Pancreas (tissue), 10 donors: ENCODE measurements at regions of chr11 and their contacts with region 1.

Region 1: DNA sequence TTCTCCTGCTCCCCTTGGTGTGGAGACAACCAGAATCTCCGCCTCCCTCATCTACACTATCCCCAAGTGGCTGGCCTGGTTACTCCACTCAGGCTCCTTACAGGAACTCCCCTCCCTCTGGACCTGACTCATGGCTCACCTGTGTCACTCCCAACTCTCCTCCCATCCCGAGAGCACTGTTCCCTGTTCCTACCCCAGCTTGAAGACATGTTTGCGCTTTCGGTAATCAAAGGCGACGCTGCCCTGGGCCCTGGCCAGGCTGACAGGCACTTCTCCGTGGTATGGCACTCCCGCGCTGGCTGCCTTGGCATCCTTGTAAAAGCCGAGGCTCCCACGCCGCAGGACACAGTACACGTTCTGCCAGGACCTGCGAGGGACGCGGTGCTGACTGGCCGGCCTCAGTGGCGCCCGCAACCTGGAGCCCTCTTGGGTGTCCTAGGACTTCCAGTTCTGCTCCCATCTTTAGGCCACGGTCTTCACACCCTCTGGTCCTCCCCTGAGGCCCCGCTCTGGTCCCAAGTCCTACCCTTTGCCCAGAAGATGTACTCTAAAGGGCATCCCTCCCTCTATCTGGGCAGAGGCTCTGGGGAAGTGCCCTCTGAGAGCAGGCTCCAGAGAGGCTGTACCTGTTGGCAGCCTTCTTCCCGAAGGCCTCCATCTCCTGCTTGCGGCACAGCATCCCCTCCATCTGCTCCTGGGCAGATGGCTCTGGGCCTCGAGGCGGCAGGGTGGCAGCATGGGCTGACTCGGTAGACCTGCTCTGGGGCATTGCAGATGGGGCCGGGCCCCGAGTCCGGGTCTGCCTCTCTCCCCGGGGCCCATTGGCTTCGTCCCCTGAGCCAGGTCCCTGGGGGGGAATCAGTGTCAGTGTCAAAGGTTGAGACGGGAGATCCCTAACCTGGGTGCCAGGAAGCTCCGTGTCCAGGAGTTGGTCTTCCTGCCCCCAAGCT is 9.4 kb upstream of the RBM4B start:
- DNase-seq: peak in 1 of 6 donors; percentile 74
- ATAC-seq: peak in 1 of 4 donors; percentile 24
- H3K4me3 ChIP-seq: no peak overlapping the region
- H3K27ac ChIP-seq: no peak overlapping the region
- H3K4me1 ChIP-seq: no peaks in the 10 kb centered on the region
- H3K27me3 ChIP-seq: no peaks in the 10 kb centered on the region
- CTCF ChIP-seq: no peak

Region 2: DNA sequence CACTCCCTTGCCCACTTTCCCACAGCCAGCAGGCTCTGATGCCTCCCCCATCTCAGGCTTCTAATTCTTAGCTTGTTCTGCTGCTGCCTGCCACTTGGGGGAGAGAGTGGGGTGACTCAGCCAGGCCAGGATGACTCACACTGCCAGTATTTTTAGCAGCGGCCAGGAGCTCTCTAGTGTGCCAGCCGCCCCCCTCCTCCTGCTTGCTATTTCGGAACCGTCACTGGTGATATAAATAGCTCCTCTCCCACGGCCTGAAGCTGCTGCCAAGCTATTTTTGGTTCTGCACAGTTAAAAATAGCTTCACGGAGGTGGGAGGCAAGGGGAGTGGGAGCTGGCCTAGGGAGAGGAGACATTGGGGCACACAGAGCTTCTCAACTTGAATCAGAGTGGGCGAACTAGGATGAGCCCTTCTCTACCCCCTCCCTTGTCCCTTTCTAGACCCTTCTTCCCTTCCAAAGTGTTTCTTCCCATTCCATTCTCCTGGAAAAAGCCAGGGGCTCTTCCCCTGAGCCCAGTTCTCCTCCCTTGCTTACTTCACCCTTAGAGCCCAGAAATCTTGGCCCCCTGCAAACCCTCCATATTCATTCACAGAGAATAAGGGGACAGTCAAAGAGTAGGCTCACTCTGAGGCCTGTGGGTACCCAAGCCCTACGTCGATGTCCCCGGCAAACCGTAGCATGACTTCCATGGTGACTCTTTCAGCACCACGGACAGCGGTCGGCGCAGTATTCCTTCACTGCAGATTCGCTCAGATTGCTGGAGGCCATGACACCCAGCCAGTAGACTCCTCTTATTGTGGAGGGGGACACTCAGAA is 268.7 kb before region 1 on chr11:
- intact Hi-C with region 1: loop called in 2 of 3 experiments (anchors 10 kb)
- DNase-seq: peak in 5 of 6 donors; percentile 24 to 79 (median 49)
- ATAC-seq: peak in 3 of 4 donors; percentile 40 to 68 (median 62)
- H3K4me3 ChIP-seq: no peak overlapping the region
- H3K27ac ChIP-seq: no peak overlapping the region
- H3K4me1 ChIP-seq: no peaks in the 10 kb centered on the region
- H3K27me3 ChIP-seq: peaks cover 0 to 4% (median 0%) of the 10 kb centered on the region in 4 donors
- CTCF ChIP-seq: no peak